Naive thymus-derived CD4-positive, alpha-beta T cell (primary cell): ENCODE measurements at regions of chr2 and their contacts with region 1.

Region 1: DNA sequence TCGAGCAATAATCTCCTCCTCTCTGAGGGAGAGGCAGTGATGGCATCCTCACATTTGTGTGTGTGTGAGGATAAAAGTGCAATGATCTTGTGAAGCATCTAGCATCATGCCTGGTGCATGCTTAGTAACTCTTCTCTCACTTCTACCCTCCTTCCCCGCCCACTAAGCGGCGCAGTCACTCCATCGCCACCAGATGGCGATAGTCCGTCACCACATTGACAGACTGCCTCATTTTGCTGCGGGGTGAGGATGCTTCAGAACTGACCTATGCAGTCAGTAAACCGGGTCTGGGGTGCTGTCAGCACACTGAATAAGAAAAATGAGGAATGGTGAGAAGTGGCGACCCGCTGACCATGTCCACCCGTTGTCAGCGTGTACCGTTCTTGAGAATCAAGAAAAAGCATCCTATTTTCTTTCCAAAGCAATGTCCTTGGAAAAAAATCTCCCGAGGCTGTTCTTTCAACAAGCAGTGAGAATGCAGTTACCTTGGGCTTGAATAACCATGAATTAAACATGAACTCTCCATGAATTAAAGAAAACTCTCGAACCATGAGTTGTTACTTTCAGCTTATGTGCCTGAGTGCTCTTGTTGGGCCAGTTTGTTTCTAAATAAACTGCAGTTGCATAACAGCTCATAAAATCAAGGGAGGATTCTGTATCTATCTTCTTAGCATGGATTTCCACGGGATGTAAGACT is 37.3 kb upstream of the TMEM177 start:
- DNase-seq: peak; percentile 42 to 77 (median 64)
- ATAC-seq: peak; percentile 95
- H3K4me3 ChIP-seq: no peak overlapping the region
- H3K4me3 Mint-ChIP-seq: no peak overlapping the region
- H3K27ac ChIP-seq: no peak overlapping the region
- H3K27ac Mint-ChIP-seq: no peak overlapping the region
- H3K4me1 ChIP-seq: peaks cover 0 to 4% of the 10 kb centered on the region in 2 donors
- H3K4me1 Mint-ChIP-seq: peaks cover 0 to 13% (median 5%) of the 10 kb centered on the region in 7 donors
- H3K27me3 ChIP-seq: no peaks in the 10 kb centered on the region
- H3K27me3 Mint-ChIP-seq: peaks cover 0 to 14% (median 0%) of the 10 kb centered on the region in 5 donors

Region 2: GRCh38 chr2:119659601-119660342 is 18.1 kb after region 1 on chr2:
- CTCF ChIA-PET with region 1: interaction called, 10 read pairs
- POLR2A ChIA-PET with region 1: no interaction called
- intact Hi-C with region 1: loop called (anchors 1 kb)
- DNase-seq: peak in 4 of 9 donors; percentile 16 to 35 (median 27)
- ATAC-seq: peak; percentile 54
- H3K4me3 ChIP-seq: no peak overlapping the region
- H3K4me3 Mint-ChIP-seq: no peak overlapping the region
- H3K27ac ChIP-seq: no peak overlapping the region
- H3K27ac Mint-ChIP-seq: peak overlapping the region in 1 of 9 donors; percentile 23
- H3K4me1 ChIP-seq: peaks cover 0 to 3% of the 10 kb centered on the region in 2 donors
- H3K4me1 Mint-ChIP-seq: peaks cover 0 to 21% (median 5%) of the 10 kb centered on the region in 7 donors
- H3K27me3 ChIP-seq: no peaks in the 10 kb centered on the region
- H3K27me3 Mint-ChIP-seq: peaks cover 4 to 14% (median 8%) of the 10 kb centered on the region in 5 donors

Region 3: DNA sequence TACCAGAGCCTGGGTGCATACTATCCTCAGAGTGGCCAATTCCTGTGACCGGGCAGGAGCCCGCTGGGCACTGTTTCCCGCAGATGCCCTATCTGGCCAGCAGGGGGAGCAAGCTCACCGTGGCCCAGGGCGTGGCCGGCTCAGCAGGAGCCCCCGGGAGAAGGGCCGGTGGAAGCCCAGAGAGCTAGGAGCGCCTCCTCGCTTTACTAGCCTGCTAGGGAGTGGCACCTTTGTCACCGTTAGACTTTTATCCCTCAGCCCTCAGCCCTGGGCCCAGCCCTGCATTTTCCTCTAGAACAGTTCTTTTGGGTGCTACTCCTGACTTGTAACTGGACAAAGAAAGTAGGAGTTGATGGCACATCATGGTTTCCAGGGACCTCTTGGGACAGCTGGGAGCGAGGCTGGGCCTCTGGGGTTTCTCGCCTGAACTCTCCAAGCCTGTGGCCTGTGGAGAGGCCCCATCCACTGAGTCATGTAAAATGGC is 61.2 kb after region 1 on chr2:
- CTCF ChIA-PET with region 1: interaction called, 3 read pairs
- POLR2A ChIA-PET with region 1: interaction called, 3 read pairs
- intact Hi-C with region 1: loop called in 1 of 2 experiments (anchors 1 kb)
- DNase-seq: peak; percentile 26 to 69 (median 53)
- ATAC-seq: peak; percentile 92
- H3K4me3 ChIP-seq: peak overlapping the region; percentile 16
- H3K4me3 Mint-ChIP-seq: no peak overlapping the region
- H3K27ac ChIP-seq: no peak overlapping the region
- H3K27ac Mint-ChIP-seq: peak overlapping the region in 2 of 9 donors; percentile 6 to 56
- H3K4me1 ChIP-seq: peaks cover 6 to 9% of the 10 kb centered on the region in 2 donors
- H3K4me1 Mint-ChIP-seq: peaks cover 0 to 23% (median 13%) of the 10 kb centered on the region in 7 donors
- H3K27me3 ChIP-seq: no peaks in the 10 kb centered on the region
- H3K27me3 Mint-ChIP-seq: peaks cover 0 to 4% (median 0%) of the 10 kb centered on the region in 5 donors